Calu3 (cell line): ENCODE measurements at regions of chr18 and their contacts with region 1.

Region 1: DNA sequence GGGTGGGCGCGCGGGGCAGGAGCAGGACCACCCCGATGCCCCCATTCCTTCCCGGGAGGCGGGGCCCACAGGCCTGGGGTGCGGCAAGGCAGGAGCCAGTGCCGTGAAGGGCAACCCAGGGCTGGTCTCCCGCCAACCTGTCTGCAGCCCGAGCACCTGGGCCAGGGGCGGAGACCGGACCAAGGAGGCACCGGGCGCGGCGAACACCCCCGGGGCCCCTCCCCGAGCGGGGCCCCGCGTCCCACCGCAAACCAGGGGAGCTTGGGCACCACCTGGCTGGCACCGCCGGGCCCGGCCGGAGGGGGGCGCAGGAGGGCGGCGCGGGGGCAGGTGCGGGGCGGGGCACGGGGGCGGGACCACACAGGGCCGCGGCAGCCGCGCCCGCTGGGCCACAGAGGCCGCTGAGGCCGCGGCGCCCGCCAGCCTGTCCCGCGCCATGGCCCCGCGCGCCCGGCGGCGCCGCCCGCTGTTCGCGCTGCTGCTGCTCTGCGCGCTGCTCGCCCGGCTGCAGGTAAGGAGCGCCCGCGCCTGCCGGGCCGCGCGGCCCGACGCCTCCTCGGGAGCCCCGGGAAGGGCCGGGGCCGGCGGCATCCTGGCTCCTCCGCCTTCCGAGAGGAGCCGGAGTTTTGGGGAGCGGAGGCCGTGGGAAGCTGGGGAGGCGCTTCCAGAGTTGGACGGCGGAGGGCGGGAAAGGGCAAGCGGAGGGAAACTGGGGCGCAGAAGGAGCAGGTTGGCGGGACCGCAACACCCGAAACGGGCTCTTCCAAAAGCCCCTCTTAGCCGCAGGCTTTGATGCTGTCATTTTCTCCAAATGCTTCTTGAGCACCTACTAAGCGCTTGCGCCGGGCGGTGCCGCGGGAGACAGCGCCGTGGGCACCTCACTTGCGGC is at the start of gene TNFRSF11A:
- DNase-seq: peak; percentile 88
- H3K4me3 Mint-ChIP-seq: peak within 1 kb of the TSS; percentile 90
- H3K27ac Mint-ChIP-seq: peak within 1 kb of the TSS; percentile 79
- H3K4me1 Mint-ChIP-seq: peaks cover 62% of the 10 kb centered on the region
- H3K27me3 Mint-ChIP-seq: no peaks in the 10 kb centered on the region
- CTCF ChIP-seq: peak; percentile 54
- total RNA-seq, gene TNFRSF11A: 94.6 and 126 TPM in 2 replicates

Region 2: GRCh38 chr18:62186774-62187542 is 138.2 kb before region 1 on chr18 and contains the starts of genes PIGN and RELCH:
- CTCF ChIA-PET with region 1: no interaction called
- intact Hi-C with region 1: loop called (anchors 5 kb)
- DNase-seq: peak; percentile 96
- H3K4me3 Mint-ChIP-seq: peak within 1 kb of the TSS; percentile 99
- H3K27ac Mint-ChIP-seq: peak within 1 kb of the TSS; percentile 97
- H3K4me1 Mint-ChIP-seq: peaks cover 33% of the 10 kb centered on the region
- H3K27me3 Mint-ChIP-seq: no peaks in the 10 kb centered on the region
- CTCF ChIP-seq: no peak
- total RNA-seq, gene PIGN: 52.5 and 57.3 TPM in 2 replicates
- total RNA-seq, gene RELCH: 54.5 and 63.9 TPM in 2 replicates

Region 3: GRCh38 chr18:62339106-62339988 is 14.2 kb after region 1 on chr18:
- CTCF ChIA-PET with region 1: interaction called, 21 read pairs
- intact Hi-C with region 1: no loop called
- DNase-seq: no peak
- H3K4me3 Mint-ChIP-seq: peak overlapping the region; percentile 59
- H3K27ac Mint-ChIP-seq: peak overlapping the region; percentile 91
- H3K4me1 Mint-ChIP-seq: peaks cover 77% of the 10 kb centered on the region
- H3K27me3 Mint-ChIP-seq: no peaks in the 10 kb centered on the region
- CTCF ChIP-seq: no peak

Region 4: GRCh38 chr18:62526098-62527025 is 201.2 kb after region 1 on chr18:
- CTCF ChIA-PET with region 1: no interaction called
- intact Hi-C with region 1: loop called (anchors 5 kb)
- DNase-seq: peak; percentile 83
- H3K4me3 Mint-ChIP-seq: peak overlapping the region; percentile 84
- H3K27ac Mint-ChIP-seq: peak overlapping the region; percentile 97
- H3K4me1 Mint-ChIP-seq: peaks cover 38% of the 10 kb centered on the region
- H3K27me3 Mint-ChIP-seq: no peaks in the 10 kb centered on the region
- CTCF ChIP-seq: no peak